ENCODE measurements at regions of chr5 and their contacts with region 1.

Region 1: GRCh38 chr5:142548739-142549275 is 137.1 kb downstream of the FGF1 start:
- DNase-seq: peak; percentile 68
- H3K4me3 Mint-ChIP-seq: no peak overlapping the region
- H3K27ac Mint-ChIP-seq: no peak overlapping the region
- H3K4me1 Mint-ChIP-seq: peaks cover 3% of the 10 kb centered on the region
- H3K27me3 Mint-ChIP-seq: peaks cover 31% of the 10 kb centered on the region

Region 2: GRCh38 chr5:142151436-142152383 is 397.1 kb before region 1 on chr5:
- intact Hi-C with region 1: loop called (anchors 1 kb)
- DNase-seq: peak; percentile 87
- H3K4me3 Mint-ChIP-seq: no peak overlapping the region
- H3K27ac Mint-ChIP-seq: no peak overlapping the region
- H3K4me1 Mint-ChIP-seq: peaks cover 6% of the 10 kb centered on the region
- H3K27me3 Mint-ChIP-seq: no peaks in the 10 kb centered on the region

Measured in activated CD4-positive, alpha-beta T cell treated with anti-CD3 and anti-CD28 coated beads, Interleukin-2, amount 10 ng/mL, durations not matched to agents 24 days and 14 days (primary cell).